ENCODE measurements at regions of chr4 and their contacts with region 1.

Region 1: DNA sequence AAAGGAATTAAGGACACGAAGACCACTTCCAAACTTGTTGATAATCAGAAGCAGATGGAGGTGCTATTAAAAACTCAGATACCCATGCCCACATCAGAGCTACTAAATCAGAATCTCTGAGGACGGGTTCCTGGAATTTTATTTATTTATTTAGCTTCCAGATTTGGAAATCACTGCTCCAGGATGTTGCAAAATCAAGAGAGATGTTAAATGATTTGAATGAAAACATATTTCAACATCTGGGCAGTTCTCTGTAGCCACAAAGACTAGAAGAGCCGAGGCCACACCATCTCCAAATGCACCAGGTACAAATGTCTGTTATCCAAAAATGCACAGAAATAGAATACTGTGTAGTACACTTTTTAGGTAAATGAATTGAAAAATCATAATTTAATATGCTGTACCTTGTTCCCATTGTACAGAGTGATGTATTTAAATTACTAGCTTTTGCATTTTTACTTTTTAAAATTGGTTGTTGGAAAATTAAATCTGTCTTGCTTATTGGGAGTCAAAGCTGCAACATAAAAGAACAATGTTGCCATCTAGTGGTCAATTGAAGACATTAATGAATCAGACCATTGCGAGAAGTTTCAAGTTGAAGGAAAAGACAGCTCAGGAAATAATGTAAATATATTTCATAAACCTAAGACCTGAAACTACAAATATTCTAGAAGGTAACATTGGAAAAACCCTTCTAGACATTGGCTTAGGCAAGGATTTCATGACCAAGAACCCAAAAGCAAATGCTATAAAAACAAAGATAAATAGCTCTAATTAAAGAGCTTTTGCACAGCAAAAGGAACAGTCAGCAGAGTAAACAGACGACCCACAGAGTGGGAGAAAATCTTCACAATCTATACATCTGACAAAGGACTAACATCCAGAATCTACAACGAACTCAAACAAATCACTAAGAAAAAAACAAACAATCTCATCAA is 151.3 kb upstream of the TTC29 start:
- DNase-seq: no peak
- H3K4me3 Mint-ChIP-seq: no peak overlapping the region
- H3K27ac Mint-ChIP-seq: no peak overlapping the region
- H3K4me1 Mint-ChIP-seq: no peaks in the 10 kb centered on the region
- H3K27me3 Mint-ChIP-seq: peaks cover 10% of the 10 kb centered on the region

Region 2: GRCh38 chr4:146342600-146343192 is 754.2 kb before region 1 on chr4:
- CTCF ChIA-PET with region 1: interaction called, 10 read pairs
- POLR2A ChIA-PET with region 1: no interaction called
- DNase-seq: no peak
- H3K4me3 Mint-ChIP-seq: no peak overlapping the region
- H3K27ac Mint-ChIP-seq: no peak overlapping the region
- H3K4me1 Mint-ChIP-seq: peaks cover 3% of the 10 kb centered on the region
- H3K27me3 Mint-ChIP-seq: no peaks in the 10 kb centered on the region

Region 3: GRCh38 chr4:147019061-147019460 is 77.9 kb before region 1 on chr4:
- CTCF ChIA-PET with region 1: interaction called, 30 read pairs
- POLR2A ChIA-PET with region 1: no interaction called
- DNase-seq: peak; percentile 54
- H3K4me3 Mint-ChIP-seq: no peak overlapping the region
- H3K27ac Mint-ChIP-seq: no peak overlapping the region
- H3K4me1 Mint-ChIP-seq: no peaks in the 10 kb centered on the region
- H3K27me3 Mint-ChIP-seq: peaks cover 4% of the 10 kb centered on the region